IMR-90 (cell line): ENCODE measurements at regions of chr15 and their contacts with region 1.

Region 1: GRCh38 chr15:82046666-82047452 is 1.0 kb upstream of the MEX3B start:
- DNase-seq: peak; percentile 92
- ATAC-seq: peak; percentile 69
- H3K4me3 ChIP-seq: peak overlapping the region; percentile 56
- H3K27ac ChIP-seq: peak overlapping the region; percentile 82
- H3K4me1 ChIP-seq: peaks cover 4% of the 10 kb centered on the region; the same call in 1 of the 2 replicates
- H3K27me3 ChIP-seq: no peaks in the 10 kb centered on the region
- CTCF ChIP-seq: peak; percentile 85
- POLR2A ChIP-seq: peak; percentile 67
- RAD21 ChIP-seq: peak; percentile 77

Region 2: DNA sequence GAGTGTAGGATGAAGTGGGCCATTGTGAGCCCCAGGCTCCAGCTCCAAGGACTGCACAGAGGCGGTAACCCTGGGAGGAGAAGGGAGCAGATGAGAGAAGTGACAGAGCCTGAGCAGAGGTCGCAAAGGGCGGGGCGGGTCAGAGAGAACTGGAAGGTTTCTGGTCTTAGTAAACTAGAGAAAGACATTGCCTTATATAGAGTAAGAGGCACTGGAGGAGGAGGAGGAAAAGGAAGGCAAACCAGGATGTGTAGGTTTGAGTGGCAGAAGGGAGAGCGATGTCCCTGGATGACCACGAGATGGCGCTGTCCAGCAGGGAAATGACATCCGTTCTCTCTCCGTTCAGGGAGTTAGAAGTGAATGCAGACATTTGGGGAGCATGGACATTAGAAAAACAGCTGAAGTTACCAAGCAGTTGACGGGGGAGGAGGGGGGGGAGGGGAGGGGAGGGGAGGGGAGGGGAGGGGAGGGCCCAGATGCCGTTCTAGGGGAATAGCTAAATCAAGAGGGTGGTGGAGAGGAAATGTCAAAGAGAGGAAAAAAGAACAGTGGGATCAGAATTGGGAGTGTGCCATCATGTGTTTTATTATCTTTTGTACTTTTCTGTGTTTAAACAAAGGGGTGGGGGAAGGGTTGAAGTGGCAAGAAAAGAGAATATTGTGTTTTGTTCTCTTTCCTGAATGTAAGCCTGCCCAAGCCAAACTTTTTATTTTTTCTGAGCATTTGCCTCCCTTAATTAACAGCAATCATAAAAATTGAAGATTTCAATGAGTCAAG is 771.7 kb before region 1 on chr15:
- CTCF ChIA-PET with region 1: no interaction called
- POLR2A ChIA-PET with region 1: no interaction called
- dilution Hi-C with region 1: no loop called
- in situ Hi-C with region 1: no loop called
- intact Hi-C with region 1: loop called (anchors 1 kb)
- DNase-seq: peak; percentile 86
- ATAC-seq: peak; percentile 91
- H3K4me3 ChIP-seq: no peak overlapping the region
- H3K27ac ChIP-seq: no peak overlapping the region; the same call in 1 of the 2 replicates
- H3K4me1 ChIP-seq: peaks cover 9% of the 10 kb centered on the region
- H3K27me3 ChIP-seq: no peaks in the 10 kb centered on the region
- CTCF ChIP-seq: peak; percentile 92
- POLR2A ChIP-seq: no peak
- RAD21 ChIP-seq: peak; percentile 98

Region 3: DNA sequence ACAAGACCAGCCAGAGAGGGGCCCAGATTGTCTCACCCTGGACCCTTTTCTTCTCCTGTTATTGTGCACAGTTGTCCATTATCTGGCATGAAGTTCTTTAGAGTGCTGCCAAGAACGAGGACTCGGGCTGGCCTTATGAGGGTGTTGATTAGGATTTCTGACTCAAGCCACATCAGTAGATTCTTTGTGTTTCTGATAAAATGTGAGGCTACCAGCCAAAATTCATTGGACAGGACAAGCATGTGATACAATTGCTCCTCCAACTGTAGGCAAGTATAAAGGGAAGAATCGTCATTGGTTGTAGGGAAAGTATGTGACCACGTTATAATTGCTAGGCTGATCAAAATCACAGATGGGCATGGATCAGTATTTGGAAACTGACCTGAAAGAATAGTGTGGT is 573.7 kb before region 1 on chr15:
- CTCF ChIA-PET with region 1: no interaction called
- POLR2A ChIA-PET with region 1: no interaction called
- dilution Hi-C with region 1: no loop called
- in situ Hi-C with region 1: loop called (anchors 10 kb)
- intact Hi-C with region 1: no loop called
- DNase-seq: no peak
- ATAC-seq: no peak
- H3K4me3 ChIP-seq: no peak overlapping the region
- H3K27ac ChIP-seq: no peak overlapping the region
- H3K4me1 ChIP-seq: no peaks in the 10 kb centered on the region
- H3K27me3 ChIP-seq: peaks cover 14% of the 10 kb centered on the region
- CTCF ChIP-seq: no peak
- POLR2A ChIP-seq: no peak
- RAD21 ChIP-seq: no peak

Region 4: GRCh38 chr15:81642451-81642990 is 404.3 kb before region 1 on chr15:
- CTCF ChIA-PET with region 1: no interaction called
- POLR2A ChIA-PET with region 1: no interaction called
- dilution Hi-C with region 1: no loop called
- in situ Hi-C with region 1: no loop called
- intact Hi-C with region 1: loop called (anchors 1 kb)
- DNase-seq: peak; percentile 97
- ATAC-seq: peak; percentile 95
- H3K4me3 ChIP-seq: no peak overlapping the region
- H3K27ac ChIP-seq: peak overlapping the region; percentile 93; the same call in 1 of the 2 replicates
- H3K4me1 ChIP-seq: peaks cover 11% of the 10 kb centered on the region
- H3K27me3 ChIP-seq: no peaks in the 10 kb centered on the region
- CTCF ChIP-seq: no peak
- POLR2A ChIP-seq: no peak
- RAD21 ChIP-seq: no peak

Region 5: DNA sequence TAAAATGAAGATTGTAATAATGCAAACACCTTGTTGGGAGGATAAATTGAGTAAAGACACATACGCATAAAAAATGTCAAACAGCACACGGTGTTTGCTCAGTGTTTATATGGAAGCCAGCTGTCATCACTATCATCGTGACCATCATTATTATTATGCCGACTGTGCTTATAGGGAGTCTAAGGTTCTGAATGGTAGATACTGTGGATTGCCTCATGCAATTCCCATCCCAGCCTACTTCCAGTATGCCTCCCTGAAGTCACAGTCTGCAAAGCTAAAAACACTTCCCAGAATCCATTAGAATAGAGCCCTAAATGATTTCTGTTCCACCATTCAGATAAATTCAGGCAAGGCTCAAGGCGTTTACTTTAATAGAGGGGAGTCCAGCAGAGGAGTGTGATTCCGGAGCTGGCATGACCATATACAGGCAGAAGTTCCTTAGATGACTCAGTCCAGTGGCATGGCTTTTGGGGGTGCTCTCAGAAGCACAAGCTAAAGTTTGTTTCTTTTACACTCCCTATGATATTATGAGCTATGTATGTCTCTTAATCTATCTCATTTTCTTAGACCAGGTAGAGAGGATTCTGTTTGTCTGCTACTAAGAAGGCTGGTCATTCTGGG is 149.7 kb before region 1 on chr15:
- CTCF ChIA-PET with region 1: no interaction called
- POLR2A ChIA-PET with region 1: no interaction called
- dilution Hi-C with region 1: no loop called
- in situ Hi-C with region 1: loop called (anchors 10 kb)
- intact Hi-C with region 1: loop called (anchors 2 kb)
- DNase-seq: peak; percentile 90
- ATAC-seq: peak; percentile 99
- H3K4me3 ChIP-seq: no peak overlapping the region
- H3K27ac ChIP-seq: peak overlapping the region; percentile 85
- H3K4me1 ChIP-seq: peaks cover 6% of the 10 kb centered on the region
- H3K27me3 ChIP-seq: no peaks in the 10 kb centered on the region
- CTCF ChIP-seq: no peak
- POLR2A ChIP-seq: no peak
- RAD21 ChIP-seq: no peak

Region 6: DNA sequence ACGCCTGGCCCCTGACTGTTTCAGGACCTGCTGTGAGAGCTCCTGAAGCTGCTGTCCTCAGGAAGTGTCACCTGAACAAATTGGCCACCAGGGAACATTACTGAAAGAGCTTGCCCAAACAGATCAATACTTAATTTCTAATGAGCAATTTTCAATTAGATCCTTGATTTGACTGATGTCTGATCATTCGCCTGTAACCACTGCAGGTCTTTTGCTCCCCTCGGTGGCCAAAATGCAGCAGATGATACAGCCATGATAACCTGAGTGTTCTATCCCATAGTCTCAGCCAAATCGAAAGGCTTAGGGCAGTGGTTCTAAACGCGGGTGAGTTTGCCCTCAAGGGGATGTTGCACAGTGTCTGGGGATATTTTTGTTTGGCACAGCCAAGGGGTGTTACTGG is 56.6 kb after region 1 on chr15:
- CTCF ChIA-PET with region 1: interaction called, 3 read pairs
- POLR2A ChIA-PET with region 1: no interaction called
- dilution Hi-C with region 1: no loop called
- in situ Hi-C with region 1: no loop called
- intact Hi-C with region 1: loop called (anchors 5 kb)
- DNase-seq: no peak
- ATAC-seq: no peak
- H3K4me3 ChIP-seq: no peak overlapping the region
- H3K27ac ChIP-seq: no peak overlapping the region
- H3K4me1 ChIP-seq: peaks cover 15% of the 10 kb centered on the region
- H3K27me3 ChIP-seq: no peaks in the 10 kb centered on the region
- CTCF ChIP-seq: peak; percentile 37
- POLR2A ChIP-seq: no peak
- RAD21 ChIP-seq: peak; percentile 53

Region 7: DNA sequence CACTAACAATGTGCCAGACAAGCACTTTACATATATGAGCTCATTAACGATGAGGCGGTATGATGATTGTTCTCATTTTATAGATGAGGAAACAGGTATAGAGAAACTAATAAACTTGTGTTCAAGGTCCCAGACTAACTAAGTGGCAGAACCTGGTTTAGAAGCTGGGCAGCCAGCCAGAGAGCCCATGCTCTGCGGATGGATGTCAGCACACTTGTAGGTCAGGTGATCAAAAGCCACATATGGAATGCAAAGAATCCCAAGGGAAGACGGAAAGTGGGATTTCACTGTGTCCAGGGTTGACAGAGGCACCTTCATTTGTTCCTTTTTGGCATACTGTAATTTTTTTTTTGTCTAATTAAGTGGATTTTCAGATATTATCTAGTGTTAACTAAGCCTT is 112.0 kb after region 1 on chr15:
- CTCF ChIA-PET with region 1: no interaction called
- POLR2A ChIA-PET with region 1: no interaction called
- dilution Hi-C with region 1: no loop called
- in situ Hi-C with region 1: no loop called
- intact Hi-C with region 1: no loop called
- DNase-seq: no peak
- ATAC-seq: no peak
- H3K4me3 ChIP-seq: no peak overlapping the region
- H3K27ac ChIP-seq: no peak overlapping the region
- H3K4me1 ChIP-seq: no peaks in the 10 kb centered on the region; the same call in 1 of the 2 replicates
- H3K27me3 ChIP-seq: no peaks in the 10 kb centered on the region
- CTCF ChIP-seq: no peak
- POLR2A ChIP-seq: no peak
- RAD21 ChIP-seq: no peak

Region 8: DNA sequence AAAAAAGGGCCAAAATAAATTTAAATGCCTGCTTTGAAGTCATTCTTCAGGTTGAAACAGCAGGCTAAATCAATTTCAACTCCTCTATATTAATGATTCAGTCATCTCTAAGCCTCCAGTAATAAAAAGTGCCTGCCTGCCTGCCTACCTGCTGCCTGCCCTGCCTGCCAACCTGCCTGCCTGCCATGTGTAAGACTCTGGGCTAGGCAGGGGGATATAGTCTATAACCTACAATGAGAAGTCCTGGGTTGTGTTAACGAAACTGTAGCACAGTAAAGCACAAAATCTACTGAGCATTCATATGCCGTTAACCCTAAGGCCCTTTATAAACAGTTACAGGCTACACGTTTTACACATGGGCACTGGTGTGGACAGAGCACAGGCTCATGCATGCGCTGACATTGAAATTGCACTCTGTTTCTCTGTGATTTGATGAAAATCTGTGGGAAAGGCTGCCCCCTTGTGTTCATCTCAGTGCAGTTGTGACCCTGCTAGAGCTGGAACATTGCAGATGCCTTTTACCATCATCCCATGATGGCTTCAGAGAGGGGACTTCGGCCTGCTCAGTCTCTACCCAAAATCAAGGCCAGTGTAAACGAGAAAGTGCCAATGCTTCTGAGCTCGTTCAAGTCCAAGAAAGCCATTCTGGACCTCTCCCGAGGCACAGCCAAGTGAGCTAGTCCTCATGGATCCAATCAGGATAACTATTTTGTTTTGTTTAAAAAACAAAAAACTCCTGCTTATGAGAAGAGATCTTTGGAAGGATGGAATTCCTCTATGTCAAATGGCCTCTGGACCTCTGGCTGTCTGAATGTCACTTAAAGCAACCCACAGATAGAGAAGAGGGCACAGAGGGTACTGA is 151.1 kb after region 1 on chr15:
- CTCF ChIA-PET with region 1: no interaction called
- POLR2A ChIA-PET with region 1: interaction called, 4 read pairs
- dilution Hi-C with region 1: no loop called
- in situ Hi-C with region 1: no loop called
- intact Hi-C with region 1: loop called (anchors 1 kb)
- DNase-seq: peak; percentile 79
- ATAC-seq: peak; percentile 99
- H3K4me3 ChIP-seq: no peak overlapping the region
- H3K27ac ChIP-seq: no peak overlapping the region
- H3K4me1 ChIP-seq: no peaks in the 10 kb centered on the region
- H3K27me3 ChIP-seq: no peaks in the 10 kb centered on the region
- CTCF ChIP-seq: peak; percentile 82
- POLR2A ChIP-seq: no peak; the same call in 1 of the 2 replicates
- RAD21 ChIP-seq: peak; percentile 91